HCT116 (cell line): ENCODE measurements at regions of chr12 and their contacts with region 1.

Region 1: DNA sequence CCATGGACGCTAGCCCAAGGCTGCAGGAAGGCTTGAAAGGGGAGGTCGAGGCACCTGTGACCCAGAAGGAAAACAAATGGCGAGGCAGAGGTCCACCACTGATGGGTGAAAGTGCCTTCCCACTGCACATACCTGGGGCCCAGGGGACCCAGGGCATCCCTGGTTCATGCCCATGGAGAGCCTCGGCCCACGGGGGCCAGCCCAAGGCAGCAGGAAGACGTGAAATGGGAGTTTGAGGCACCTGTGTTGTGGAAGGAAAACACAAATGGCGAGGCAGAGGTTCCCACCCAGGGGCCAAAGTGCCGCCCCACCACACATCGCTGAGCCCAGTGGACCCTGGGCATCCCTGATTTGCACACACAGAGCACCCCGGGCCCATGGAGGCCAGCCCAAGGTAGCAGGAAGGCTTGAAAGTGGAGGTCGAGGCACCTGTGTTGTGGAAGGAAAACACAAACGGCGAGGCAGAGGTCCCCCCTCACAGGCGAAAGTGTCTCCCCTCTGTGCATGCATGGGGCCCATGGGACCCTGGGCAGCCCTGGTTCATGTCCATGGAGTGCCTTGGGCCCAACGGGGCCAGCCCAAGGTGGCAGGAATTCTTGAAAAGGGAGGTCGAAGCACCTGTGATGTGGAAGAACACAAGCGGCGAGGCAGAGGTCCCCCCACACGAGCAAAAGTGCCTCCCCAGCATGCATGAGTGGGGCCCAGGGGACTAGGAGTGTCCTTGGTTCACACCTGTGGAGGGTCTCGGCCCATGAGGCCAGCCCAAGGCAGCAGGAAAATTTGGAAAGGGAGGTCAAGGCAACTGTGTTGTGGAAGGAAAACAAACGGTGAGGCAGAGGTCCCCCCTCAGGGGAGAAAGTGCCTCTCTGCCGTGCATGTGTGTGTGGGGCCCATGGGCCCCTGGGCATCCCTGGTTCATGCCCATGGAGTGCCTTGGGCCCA is 383.3 kb downstream of the ALG10 start:
- DNase-seq: no peak
- ATAC-seq: no peak
- H3K4me3 ChIP-seq: no peak overlapping the region
- H3K27ac ChIP-seq: no peak overlapping the region
- H3K4me1 ChIP-seq: no peaks in the 10 kb centered on the region
- H3K27me3 ChIP-seq: no peaks in the 10 kb centered on the region
- CTCF ChIP-seq: no peak
- POLR2A ChIP-seq: no peak
- RAD21 ChIP-seq: no peak

Region 2: DNA sequence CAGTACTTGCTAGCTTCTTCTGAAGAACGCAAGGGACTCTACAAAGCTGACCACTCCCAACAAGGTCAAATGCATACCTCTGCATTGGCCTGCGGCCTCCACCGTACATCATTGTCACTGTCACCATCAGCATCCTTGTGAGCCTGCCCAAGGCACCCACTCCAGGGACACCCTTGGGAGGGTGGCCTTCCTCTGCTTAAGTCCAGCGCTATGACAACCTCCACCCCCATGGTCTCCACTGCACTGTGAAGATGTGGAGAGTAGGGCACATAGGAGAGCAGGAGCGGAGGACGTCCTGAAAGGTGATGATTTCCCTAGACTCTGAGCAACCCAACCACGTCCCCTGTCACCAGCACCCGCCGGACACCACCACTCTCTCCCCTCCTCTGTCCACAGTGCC is 130.4 kb before region 1 on chr12:
- CTCF ChIA-PET with region 1: no interaction called
- POLR2A ChIA-PET with region 1: no interaction called
- RAD21 ChIA-PET with region 1: no interaction called
- intact Hi-C with region 1: no loop called
- DNase-seq: no peak
- ATAC-seq: no peak
- H3K4me3 ChIP-seq: no peak overlapping the region
- H3K27ac ChIP-seq: no peak overlapping the region
- H3K4me1 ChIP-seq: no peaks in the 10 kb centered on the region
- H3K27me3 ChIP-seq: no peaks in the 10 kb centered on the region
- CTCF ChIP-seq: no peak
- POLR2A ChIP-seq: no peak
- RAD21 ChIP-seq: no peak

Region 3: DNA sequence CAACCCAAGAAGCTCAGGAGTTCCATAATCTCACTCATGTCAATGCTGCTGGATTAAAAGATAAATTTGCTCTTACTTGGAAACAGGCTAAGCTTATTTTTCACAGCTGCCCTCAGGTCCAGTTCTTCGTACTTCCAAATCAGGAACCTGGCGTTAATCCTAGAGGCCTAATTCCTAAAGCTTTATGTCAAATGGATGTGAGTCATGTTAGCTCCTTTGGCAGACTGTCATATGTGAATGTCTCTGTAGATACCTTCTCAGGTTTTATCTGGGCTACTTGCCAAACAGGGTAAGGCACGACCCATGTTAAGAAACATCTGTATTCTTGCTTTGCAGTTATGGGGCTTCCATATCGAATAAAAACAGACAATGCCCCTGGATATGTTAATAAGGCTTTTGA is 121.4 kb after region 1 on chr12:
- CTCF ChIA-PET with region 1: no interaction called
- POLR2A ChIA-PET with region 1: no interaction called
- RAD21 ChIA-PET with region 1: no interaction called
- intact Hi-C with region 1: loop called (anchors 10 kb)
- DNase-seq: no peak
- ATAC-seq: no peak
- H3K4me3 ChIP-seq: no peak overlapping the region
- H3K27ac ChIP-seq: no peak overlapping the region
- H3K4me1 ChIP-seq: no peaks in the 10 kb centered on the region
- H3K27me3 ChIP-seq: no peaks in the 10 kb centered on the region
- CTCF ChIP-seq: no peak
- POLR2A ChIP-seq: no peak
- RAD21 ChIP-seq: no peak